K562 (cell line): ENCODE measurements at regions of chr5 and their contacts with region 1.

Region 1: GRCh38 chr5:78610163-78610583 is 38.4 kb downstream of the LHFPL2 start:
- DNase-seq: no peak
- ATAC-seq: no peak; the same call in 2 of the 3 replicates
- H3K4me3 ChIP-seq: no peak overlapping the region
- H3K27ac ChIP-seq: no peak overlapping the region
- H3K4me1 ChIP-seq: peaks cover 3 to 9% of the 10 kb centered on the region in 2 experiments; a peak in 3 of 5 replicates
- H3K27me3 ChIP-seq: no peaks in the 10 kb centered on the region
- CTCF ChIP-seq: no peak
- EP300 ChIP-seq: no peak
- POLR2A ChIP-seq: no peak
- RAD21 ChIP-seq: no peak

Region 2: GRCh38 chr5:78547731-78548615 is 62.2 kb before region 1 on chr5:
- CTCF ChIA-PET with region 1: no interaction called
- POLR2A ChIA-PET with region 1: no interaction called
- in situ Hi-C with region 1: loop called (anchors 5 kb)
- intact Hi-C with region 1: no loop called
- DNase-seq: no peak
- ATAC-seq: no peak
- H3K4me3 ChIP-seq: no peak overlapping the region
- H3K27ac ChIP-seq: no peak overlapping the region
- H3K4me1 ChIP-seq: no peaks in the 10 kb centered on the region; a peak in 1 of 5 replicates
- H3K27me3 ChIP-seq: no peaks in the 10 kb centered on the region
- CTCF ChIP-seq: no peak
- EP300 ChIP-seq: no peak
- POLR2A ChIP-seq: no peak
- RAD21 ChIP-seq: no peak